ENCODE measurements at regions of chr16 and their contacts with region 1.

Region 1: GRCh38 chr16:88331989-88332920 is 50.5 kb upstream of the ZNF469 start:
- DNase-seq: peak; percentile 100
- H3K4me3 ChIP-seq: no peak overlapping the region
- H3K27ac ChIP-seq: peak overlapping the region; percentile 100
- H3K27me3 ChIP-seq: no peaks in the 10 kb centered on the region
- CTCF ChIP-seq: no peak

Region 2: GRCh38 chr16:88303890-88304819 is 28.1 kb before region 1 on chr16:
- CTCF ChIA-PET with region 1: no interaction called
- POLR2A ChIA-PET with region 1: interaction called, 28 read pairs
- DNase-seq: peak; percentile 96
- H3K4me3 ChIP-seq: peak overlapping the region; percentile 27
- H3K27ac ChIP-seq: peak overlapping the region; percentile 99
- H3K27me3 ChIP-seq: no peaks in the 10 kb centered on the region
- CTCF ChIP-seq: no peak

Region 3: GRCh38 chr16:88479793-88480760 is 147.8 kb after region 1 on chr16:
- CTCF ChIA-PET with region 1: no interaction called
- POLR2A ChIA-PET with region 1: no interaction called
- DNase-seq: no peak
- H3K4me3 ChIP-seq: no peak overlapping the region
- H3K27ac ChIP-seq: no peak overlapping the region
- H3K27me3 ChIP-seq: no peaks in the 10 kb centered on the region
- CTCF ChIP-seq: no peak